Activated CD4-positive, alpha-beta memory T cell treated with anti-CD3 and anti-CD28 coated beads for 36 hours (primary cell): ENCODE measurements at regions of chr11 and their contacts with region 1.

Region 1: DNA sequence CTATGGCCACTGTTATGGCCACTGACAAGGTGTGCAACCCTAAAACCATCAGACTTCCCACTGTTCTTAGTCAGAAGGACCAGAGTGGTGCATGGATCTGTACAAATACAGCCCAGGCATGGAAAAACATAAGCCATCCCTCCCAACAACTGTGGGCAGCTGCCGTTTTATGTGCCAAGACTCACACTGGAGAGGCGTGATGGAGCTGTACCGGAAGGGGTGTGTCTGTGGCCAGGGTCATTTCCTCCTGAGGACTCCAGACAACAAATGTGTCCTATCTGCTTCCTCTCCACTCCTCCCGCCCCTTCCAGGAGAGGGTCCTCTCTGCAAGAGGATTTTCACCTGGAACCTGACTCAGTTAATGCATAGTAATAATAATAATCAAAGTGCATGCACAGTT is 29.5 kb downstream of the KCNJ1 start:
- DNase-seq: peak; percentile 57
- H3K4me3 Mint-ChIP-seq: no peak overlapping the region
- H3K27ac Mint-ChIP-seq: no peak overlapping the region
- H3K4me1 Mint-ChIP-seq: peaks cover 53% of the 10 kb centered on the region
- H3K27me3 Mint-ChIP-seq: no peaks in the 10 kb centered on the region

Region 2: GRCh38 chr11:128725630-128726319 is 111.9 kb before region 1 on chr11:
- CTCF ChIA-PET with region 1: no interaction called
- POLR2A ChIA-PET with region 1: no interaction called
- intact Hi-C with region 1: no loop called
- DNase-seq: peak; percentile 65
- H3K4me3 Mint-ChIP-seq: peak overlapping the region; percentile 59
- H3K27ac Mint-ChIP-seq: peak overlapping the region; percentile 82
- H3K4me1 Mint-ChIP-seq: peaks cover 98% of the 10 kb centered on the region
- H3K27me3 Mint-ChIP-seq: no peaks in the 10 kb centered on the region

Region 3: GRCh38 chr11:128848815-128849455 is 11.3 kb after region 1 on chr11:
- CTCF ChIA-PET with region 1: interaction called, 10 read pairs
- POLR2A ChIA-PET with region 1: no interaction called
- intact Hi-C with region 1: no loop called
- DNase-seq: peak; percentile 82
- H3K4me3 Mint-ChIP-seq: no peak overlapping the region
- H3K27ac Mint-ChIP-seq: no peak overlapping the region
- H3K4me1 Mint-ChIP-seq: peaks cover 23% of the 10 kb centered on the region
- H3K27me3 Mint-ChIP-seq: no peaks in the 10 kb centered on the region